Natural killer cell (primary cell): ENCODE measurements at regions of chr3 and their contacts with region 1.

Region 1: GRCh38 chr3:194141415-194142155 is 5.6 kb downstream of the HES1 start:
- DNase-seq: peak; percentile 39 to 71
- ATAC-seq: peak; percentile 31 to 39 (median 38)
- H3K4me3 ChIP-seq: no peak overlapping the region
- H3K4me3 Mint-ChIP-seq: peak overlapping the region; percentile 84
- H3K27ac ChIP-seq: no peak overlapping the region
- H3K27ac Mint-ChIP-seq: peak overlapping the region in 1 of 2 donors; percentile 53
- H3K4me1 ChIP-seq: peaks cover 29% of the 10 kb centered on the region
- H3K4me1 Mint-ChIP-seq: peaks cover 19 to 25% of the 10 kb centered on the region in 2 donors
- H3K27me3 ChIP-seq: peaks cover 49% of the 10 kb centered on the region
- H3K27me3 Mint-ChIP-seq: peaks cover 26 to 40% of the 10 kb centered on the region in 2 donors
- CTCF ChIP-seq: no peak

Region 2: DNA sequence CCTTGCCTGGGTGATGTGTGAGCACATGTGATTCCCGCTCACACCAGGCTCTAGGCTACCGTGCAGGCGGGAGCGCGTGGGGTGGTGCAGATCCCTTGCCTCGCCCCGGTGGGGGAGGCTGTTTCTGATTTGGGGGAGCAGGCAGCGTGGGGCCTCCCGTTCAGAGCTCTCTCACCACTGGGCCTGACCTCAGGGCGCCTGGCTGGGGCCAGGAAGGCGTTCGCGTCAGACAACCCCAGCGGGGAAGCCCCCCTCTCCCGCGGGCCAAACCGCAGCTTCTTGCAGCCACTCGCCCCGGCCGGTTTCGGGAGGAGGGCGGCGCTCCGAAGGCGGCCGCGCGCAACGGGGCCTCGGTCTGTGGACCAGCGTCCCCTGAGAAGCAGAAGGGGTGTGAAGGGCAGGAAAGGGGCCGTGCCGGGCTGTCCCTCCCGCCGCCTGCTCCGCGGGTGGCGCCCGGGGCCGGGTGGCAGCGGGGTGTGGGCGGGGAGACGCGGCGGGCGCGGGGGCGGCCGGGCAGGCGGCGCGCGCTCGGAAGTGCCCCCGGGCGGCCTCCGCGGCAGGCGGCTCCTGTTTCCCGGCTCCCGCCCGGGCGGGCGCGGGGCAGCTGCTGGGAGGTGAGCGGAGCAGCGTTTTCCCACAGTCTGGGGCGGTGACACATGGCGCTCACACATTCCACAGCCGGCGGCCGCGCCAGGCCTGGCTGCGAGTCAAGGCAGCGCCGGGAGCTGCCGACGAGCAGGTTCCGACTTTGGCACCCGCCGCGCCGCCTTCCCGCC is 70.8 kb before region 1 on chr3:
- intact Hi-C with region 1: loop called (anchors 2 kb)
- DNase-seq: peak; percentile 66 to 74
- ATAC-seq: peak; percentile 84 to 89 (median 86)
- H3K4me3 ChIP-seq: peak overlapping the region; percentile 25
- H3K4me3 Mint-ChIP-seq: peak overlapping the region; percentile 83
- H3K27ac ChIP-seq: no peak overlapping the region
- H3K27ac Mint-ChIP-seq: peak overlapping the region in 1 of 2 donors; percentile 71
- H3K4me1 ChIP-seq: peaks cover 14% of the 10 kb centered on the region
- H3K4me1 Mint-ChIP-seq: peaks cover 6 to 13% of the 10 kb centered on the region in 2 donors
- H3K27me3 ChIP-seq: peaks cover 14% of the 10 kb centered on the region
- H3K27me3 Mint-ChIP-seq: peaks cover 36 to 53% of the 10 kb centered on the region in 2 donors
- CTCF ChIP-seq: no peak

Region 3: DNA sequence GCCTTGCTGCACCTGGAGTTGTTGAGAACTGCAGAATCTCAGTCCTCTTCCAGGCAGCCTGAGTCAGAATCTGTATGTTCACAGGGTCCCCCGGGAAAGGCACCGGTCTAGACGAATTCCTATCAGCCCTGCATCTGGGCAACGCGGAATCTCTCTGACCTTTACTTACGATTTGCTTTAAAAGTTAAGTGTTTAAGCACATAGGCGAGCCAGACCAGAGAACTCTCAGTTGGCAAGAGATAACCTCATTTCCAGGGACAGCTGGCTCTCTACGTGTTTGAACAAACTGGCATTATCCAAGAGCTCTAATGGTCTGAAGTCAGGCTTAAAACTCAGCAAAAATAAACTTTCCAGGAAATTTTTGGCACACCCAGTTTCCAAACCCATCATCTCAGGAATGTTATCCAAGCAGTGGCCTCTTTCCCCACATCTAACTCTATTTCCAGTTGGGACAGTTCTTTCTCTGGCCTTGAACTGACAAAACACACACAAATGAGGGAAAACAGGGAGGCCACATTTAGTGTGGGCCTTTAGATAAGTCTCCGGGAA is 47.7 kb after region 1 on chr3:
- intact Hi-C with region 1: no loop called
- DNase-seq: no peak
- ATAC-seq: no peak
- H3K4me3 ChIP-seq: no peak overlapping the region
- H3K4me3 Mint-ChIP-seq: no peak overlapping the region
- H3K27ac ChIP-seq: no peak overlapping the region
- H3K27ac Mint-ChIP-seq: no peak overlapping the region
- H3K4me1 ChIP-seq: no peaks in the 10 kb centered on the region
- H3K4me1 Mint-ChIP-seq: peaks cover 0 to 3% of the 10 kb centered on the region in 2 donors
- H3K27me3 ChIP-seq: no peaks in the 10 kb centered on the region
- H3K27me3 Mint-ChIP-seq: peaks cover 0 to 9% of the 10 kb centered on the region in 2 donors
- CTCF ChIP-seq: no peak

Region 4: GRCh38 chr3:194204042-194204987 is 62.7 kb after region 1 on chr3:
- intact Hi-C with region 1: no loop called
- DNase-seq: peak in 1 of 2 donors; percentile 33
- ATAC-seq: peak in 1 of 3 donors; percentile 57
- H3K4me3 ChIP-seq: no peak overlapping the region
- H3K4me3 Mint-ChIP-seq: peak overlapping the region; percentile 41
- H3K27ac ChIP-seq: no peak overlapping the region
- H3K27ac Mint-ChIP-seq: no peak overlapping the region
- H3K4me1 ChIP-seq: peaks cover 7% of the 10 kb centered on the region
- H3K4me1 Mint-ChIP-seq: peaks cover 6 to 11% of the 10 kb centered on the region in 2 donors
- H3K27me3 ChIP-seq: peaks cover 41% of the 10 kb centered on the region
- H3K27me3 Mint-ChIP-seq: peaks cover 48 to 71% of the 10 kb centered on the region in 2 donors
- CTCF ChIP-seq: no peak

Region 5: DNA sequence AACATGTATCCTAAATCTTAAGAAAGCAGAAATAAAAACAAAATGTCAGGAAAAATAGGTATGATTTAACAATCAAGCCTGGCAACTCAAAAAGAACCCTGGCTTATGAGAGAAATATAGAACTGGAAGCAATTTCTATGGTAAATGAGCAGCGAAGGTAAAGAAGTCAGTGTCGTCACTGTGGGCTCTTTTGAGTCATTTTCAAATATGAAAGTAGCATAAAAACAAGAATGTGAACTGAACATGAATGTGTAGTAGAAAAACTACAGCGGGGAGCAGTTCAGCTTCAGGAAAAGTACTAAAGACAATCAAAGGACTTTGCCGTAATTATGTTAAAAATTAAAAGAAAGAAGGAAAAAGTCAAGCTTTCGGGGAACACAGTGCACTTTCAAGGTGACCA is 512.9 kb after region 1 on chr3:
- intact Hi-C with region 1: no loop called
- DNase-seq: no peak
- ATAC-seq: no peak
- H3K4me3 ChIP-seq: no peak overlapping the region
- H3K4me3 Mint-ChIP-seq: no peak overlapping the region
- H3K27ac ChIP-seq: no peak overlapping the region
- H3K27ac Mint-ChIP-seq: no peak overlapping the region
- H3K4me1 ChIP-seq: no peaks in the 10 kb centered on the region
- H3K4me1 Mint-ChIP-seq: peaks cover 0 to 6% of the 10 kb centered on the region in 2 donors
- H3K27me3 ChIP-seq: no peaks in the 10 kb centered on the region
- H3K27me3 Mint-ChIP-seq: no peaks in the 10 kb centered on the region
- CTCF ChIP-seq: no peak